Activated CD4-positive, alpha-beta memory T cell treated with anti-CD3 and anti-CD28 coated beads, Interleukin-2, amount 10 ng/mL, durations not matched to agents 7 days and 5 days (primary cell): ENCODE measurements at regions of chr17 and their contacts with region 1.

Region 1: GRCh38 chr17:29807520-29808351 is 122.3 kb downstream of the SSH2 start:
- DNase-seq: peak; percentile 72
- H3K4me3 Mint-ChIP-seq: no peak overlapping the region
- H3K27ac Mint-ChIP-seq: no peak overlapping the region
- H3K4me1 Mint-ChIP-seq: peaks cover 19% of the 10 kb centered on the region
- H3K27me3 Mint-ChIP-seq: no peaks in the 10 kb centered on the region

Region 2: DNA sequence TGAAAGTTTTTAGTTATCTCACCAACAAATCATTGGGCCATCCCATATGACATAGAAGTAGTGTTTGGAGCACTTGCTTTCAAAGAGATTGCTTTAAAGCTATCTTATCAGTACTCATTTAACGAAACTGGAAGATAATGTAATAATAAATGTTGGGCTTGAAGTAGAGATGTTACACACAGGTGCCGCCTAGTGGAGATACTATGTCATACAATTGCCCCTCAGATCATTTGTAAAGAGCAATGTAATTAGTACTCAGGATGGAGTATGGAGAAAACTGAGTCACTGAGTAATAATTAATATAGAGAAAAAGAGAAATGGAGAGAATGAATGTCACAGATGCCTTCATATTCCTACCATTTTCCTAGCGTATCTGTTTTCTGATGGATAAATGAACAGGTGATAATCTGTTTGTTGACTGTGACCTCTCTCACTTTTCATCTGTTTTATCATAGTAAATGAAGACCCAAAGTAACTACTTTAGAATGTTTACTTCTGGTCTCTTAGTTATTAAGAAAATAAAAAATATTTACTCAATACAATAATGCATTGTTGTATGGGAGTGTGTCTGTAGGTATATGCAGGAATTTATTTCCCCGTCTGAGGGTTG is 214.1 kb after region 1 on chr17:
- CTCF ChIA-PET with region 1: interaction called, 10 read pairs
- POLR2A ChIA-PET with region 1: no interaction called
- DNase-seq: peak; percentile 28
- H3K4me3 Mint-ChIP-seq: no peak overlapping the region
- H3K27ac Mint-ChIP-seq: no peak overlapping the region
- H3K4me1 Mint-ChIP-seq: no peaks in the 10 kb centered on the region
- H3K27me3 Mint-ChIP-seq: peaks cover 15% of the 10 kb centered on the region